GM12878 (cell line): ENCODE measurements at regions of chr14 and their contacts with region 1.

Region 1: GRCh38 chr14:60248697-60249318 is at the start of gene PPM1A:
- DNase-seq: peak; percentile 73
- ATAC-seq: peak; percentile 69
- H3K4me3 ChIP-seq: peak within 1 kb of the TSS; percentile 87
- H3K27ac ChIP-seq: peak within 1 kb of the TSS; percentile 100
- H3K4me1 ChIP-seq: peaks cover 13% of the 10 kb centered on the region
- H3K27me3 ChIP-seq: no peaks in the 10 kb centered on the region
- CTCF ChIP-seq: no peak
- EP300 ChIP-seq: peak; percentile 57 to 60
- POLR2A ChIP-seq: peak; percentile 90
- RAD21 ChIP-seq: no peak
- polyA plus RNA-seq, gene PPM1A: 49.0 to 58.6 TPM

Region 2: DNA sequence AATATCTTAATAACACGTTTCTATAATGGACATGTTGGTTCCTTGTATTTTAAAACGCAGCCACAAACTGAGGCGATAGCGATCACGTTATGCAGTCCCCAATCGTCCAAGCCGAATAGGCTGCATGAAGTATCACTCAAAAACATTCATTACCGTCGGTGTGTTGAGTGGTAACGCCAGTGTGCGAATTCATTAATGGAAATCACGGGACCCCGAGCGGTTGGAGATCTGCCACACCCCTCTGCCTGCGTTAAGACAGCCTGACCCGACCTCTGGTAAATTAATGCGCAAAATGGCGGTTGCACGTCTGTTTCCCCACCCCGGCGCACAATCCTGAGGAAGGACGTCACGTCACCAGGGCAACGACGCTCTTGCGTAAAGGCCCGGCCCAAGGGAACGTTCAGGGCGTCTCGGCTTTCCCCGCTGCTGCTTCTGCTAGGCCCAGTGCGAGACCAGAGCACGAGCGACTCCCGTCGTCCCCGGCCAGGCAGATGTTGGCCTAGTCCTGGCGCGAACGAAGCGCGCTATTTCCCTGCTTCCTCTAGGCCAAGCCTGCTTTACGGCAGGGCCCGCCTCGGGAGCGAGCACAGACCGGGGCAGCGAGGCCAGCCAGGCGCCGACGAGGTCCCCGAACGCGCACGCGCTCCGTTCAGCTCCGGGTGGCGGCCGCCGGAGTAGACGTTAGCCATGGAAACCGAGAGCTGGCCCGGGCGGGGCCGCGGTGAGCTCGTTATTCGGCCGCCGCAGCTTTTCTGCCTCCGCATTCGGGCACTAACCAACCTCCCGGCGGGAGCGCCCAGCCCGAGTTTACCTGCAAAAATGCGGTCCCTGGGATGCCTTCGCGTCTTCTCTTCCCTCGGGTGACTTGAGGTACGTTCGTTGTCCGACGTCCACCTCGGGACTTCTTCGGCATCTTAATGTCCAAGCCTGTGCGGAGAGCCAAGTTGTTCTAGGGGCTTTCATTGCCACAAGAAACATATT is 157.0 kb before region 1 on chr14 and contains the start of gene PCNX4:
- CTCF ChIA-PET with region 1: interaction called, 3 read pairs
- POLR2A ChIA-PET with region 1: interaction called, 7 read pairs
- RAD21 ChIA-PET with region 1: interaction called, 8 read pairs
- SMC1A ChIA-PET with region 1: no interaction called
- in situ Hi-C with region 1: no loop called
- intact Hi-C with region 1: loop called (anchors 2 kb)
- DNase-seq: peak; percentile 96
- ATAC-seq: peak; percentile 89
- H3K4me3 ChIP-seq: peak within 1 kb of the TSS; percentile 74
- H3K27ac ChIP-seq: peak within 1 kb of the TSS; percentile 95
- H3K4me1 ChIP-seq: peaks cover 11% of the 10 kb centered on the region
- H3K27me3 ChIP-seq: no peaks in the 10 kb centered on the region
- CTCF ChIP-seq: 0 out of 6 replicates have a peak, but pooled peaks of 1 of the 3 experiments have one; percentile 2
- EP300 ChIP-seq: peak; percentile 39 to 50; a peak in 3 of 4 replicates
- POLR2A ChIP-seq: peak; percentile 97
- RAD21 ChIP-seq: no peak
- polyA plus RNA-seq, gene PCNX4: 13.8 to 15.7 TPM

Region 3: DNA sequence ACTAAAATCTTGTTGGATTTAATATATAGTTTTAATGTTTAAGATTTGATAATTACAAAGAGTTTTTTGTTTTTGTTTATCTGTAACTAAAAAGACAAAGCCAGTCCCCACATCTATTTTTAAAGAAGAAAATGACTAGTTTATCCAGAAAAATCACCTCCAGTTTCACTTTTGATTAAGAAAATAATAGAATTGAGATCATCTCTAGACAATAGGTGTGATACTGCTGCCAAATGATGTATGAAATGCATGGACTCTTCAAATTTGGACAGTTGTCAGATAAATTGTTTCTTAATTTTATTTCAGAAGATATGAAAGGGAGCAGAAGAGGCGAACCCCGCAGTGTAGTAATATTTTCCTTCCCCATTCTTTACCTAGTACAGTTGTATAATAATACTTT is 137.1 kb before region 1 on chr14:
- CTCF ChIA-PET with region 1: no interaction called
- POLR2A ChIA-PET with region 1: no interaction called
- RAD21 ChIA-PET with region 1: no interaction called
- SMC1A ChIA-PET with region 1: no interaction called
- in situ Hi-C with region 1: no loop called
- intact Hi-C with region 1: no loop called
- DNase-seq: no peak
- ATAC-seq: peak; percentile 77
- H3K4me3 ChIP-seq: no peak overlapping the region
- H3K27ac ChIP-seq: no peak overlapping the region
- H3K4me1 ChIP-seq: no peaks in the 10 kb centered on the region
- H3K27me3 ChIP-seq: no peaks in the 10 kb centered on the region
- CTCF ChIP-seq: no peak
- EP300 ChIP-seq: no peak
- POLR2A ChIP-seq: no peak
- RAD21 ChIP-seq: no peak

Region 4: DNA sequence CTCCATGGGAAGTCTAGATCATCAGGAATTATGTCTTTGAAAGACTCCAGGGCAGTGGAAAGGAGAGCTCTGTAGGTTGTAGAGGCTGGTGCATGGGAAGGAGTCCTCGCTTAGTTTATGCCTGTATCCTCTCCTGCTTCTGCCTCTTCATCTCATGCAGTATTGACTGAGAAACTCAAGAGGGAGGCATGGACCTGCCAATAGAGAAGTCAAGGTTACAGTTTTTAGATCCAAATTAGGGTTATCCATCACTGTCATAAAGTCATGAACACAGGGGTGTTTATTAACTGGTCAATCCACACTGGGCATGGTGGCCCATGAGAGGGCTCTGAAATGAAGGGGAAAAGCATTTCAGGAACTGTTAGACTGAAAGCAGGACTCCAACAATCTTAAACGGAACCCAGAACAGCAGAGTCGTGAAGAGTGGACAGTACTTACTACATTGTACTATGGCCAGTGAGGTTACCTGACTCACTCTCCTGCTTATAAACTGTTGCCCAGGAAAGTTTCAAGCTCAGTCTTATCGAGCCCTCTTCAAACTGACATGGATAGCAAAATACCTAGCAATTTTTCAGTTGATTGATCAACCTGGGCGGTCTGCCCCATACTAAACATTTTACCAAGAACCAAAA is 53.5 kb before region 1 on chr14:
- CTCF ChIA-PET with region 1: interaction called, 6 read pairs
- POLR2A ChIA-PET with region 1: interaction called, 4 read pairs
- RAD21 ChIA-PET with region 1: interaction called, 13 read pairs
- SMC1A ChIA-PET with region 1: interaction called, 52 read pairs
- in situ Hi-C with region 1: no loop called
- intact Hi-C with region 1: no loop called
- DNase-seq: no peak
- ATAC-seq: peak; percentile 88
- H3K4me3 ChIP-seq: no peak overlapping the region
- H3K27ac ChIP-seq: no peak overlapping the region
- H3K4me1 ChIP-seq: peaks cover 10% of the 10 kb centered on the region
- H3K27me3 ChIP-seq: no peaks in the 10 kb centered on the region
- CTCF ChIP-seq: peak; percentile 50 to 70 (median 59); a peak in 5 of 6 replicates
- EP300 ChIP-seq: no peak
- POLR2A ChIP-seq: no peak
- RAD21 ChIP-seq: peak; percentile 91

Region 5: GRCh38 chr14:60212503-60213371 is 36.1 kb before region 1 on chr14:
- CTCF ChIA-PET with region 1: interaction called, 42 read pairs
- POLR2A ChIA-PET with region 1: interaction called, 251 read pairs
- RAD21 ChIA-PET with region 1: interaction called, 446 read pairs
- SMC1A ChIA-PET with region 1: interaction called, 303 read pairs
- in situ Hi-C with region 1: no loop called
- intact Hi-C with region 1: loop called (anchors 1 kb)
- DNase-seq: peak; percentile 98
- ATAC-seq: peak; percentile 89
- H3K4me3 ChIP-seq: no peak overlapping the region
- H3K27ac ChIP-seq: peak overlapping the region; percentile 93
- H3K4me1 ChIP-seq: peaks cover 39% of the 10 kb centered on the region
- H3K27me3 ChIP-seq: no peaks in the 10 kb centered on the region
- CTCF ChIP-seq: no peak
- EP300 ChIP-seq: peak; percentile 73 to 86
- POLR2A ChIP-seq: no peak; the same call in 1 of the 2 replicates
- RAD21 ChIP-seq: no peak

Region 6: DNA sequence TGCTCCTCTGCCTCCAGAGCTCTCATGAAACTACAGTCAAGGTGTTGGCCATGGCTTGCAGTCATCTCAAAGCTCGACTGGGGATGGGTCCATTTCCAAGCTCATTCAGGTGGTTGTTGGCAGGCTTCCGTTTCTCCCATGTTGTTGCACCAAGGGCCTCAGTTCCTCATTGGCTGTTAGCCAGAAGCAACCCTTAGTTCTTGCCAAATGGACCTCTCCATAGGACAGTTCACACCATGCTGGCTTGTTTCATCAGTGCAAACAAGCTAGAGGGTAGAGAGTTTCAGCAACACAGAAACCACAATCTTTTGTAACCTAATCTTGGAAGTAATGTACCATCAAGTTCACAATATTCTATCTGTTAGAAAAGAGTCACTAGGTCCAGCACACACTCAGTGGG is 22.5 kb before region 1 on chr14:
- CTCF ChIA-PET with region 1: interaction called, 10 read pairs
- POLR2A ChIA-PET with region 1: interaction called, 78 read pairs
- RAD21 ChIA-PET with region 1: interaction called, 30 read pairs
- SMC1A ChIA-PET with region 1: interaction called, 19 read pairs
- in situ Hi-C with region 1: no loop called
- intact Hi-C with region 1: no loop called
- DNase-seq: no peak
- ATAC-seq: no peak
- H3K4me3 ChIP-seq: no peak overlapping the region
- H3K27ac ChIP-seq: no peak overlapping the region
- H3K4me1 ChIP-seq: peaks cover 2% of the 10 kb centered on the region
- H3K27me3 ChIP-seq: no peaks in the 10 kb centered on the region
- CTCF ChIP-seq: no peak
- EP300 ChIP-seq: no peak
- POLR2A ChIP-seq: no peak
- RAD21 ChIP-seq: no peak

Region 7: GRCh38 chr14:60276342-60276741 is 27.5 kb after region 1 on chr14:
- CTCF ChIA-PET with region 1: interaction called, 4 read pairs
- POLR2A ChIA-PET with region 1: no interaction called
- RAD21 ChIA-PET with region 1: interaction called, 13 read pairs
- SMC1A ChIA-PET with region 1: interaction called, 7 read pairs
- in situ Hi-C with region 1: no loop called
- intact Hi-C with region 1: no loop called
- DNase-seq: no peak
- ATAC-seq: no peak
- H3K4me3 ChIP-seq: no peak overlapping the region
- H3K27ac ChIP-seq: no peak overlapping the region
- H3K4me1 ChIP-seq: peaks cover 8% of the 10 kb centered on the region
- H3K27me3 ChIP-seq: no peaks in the 10 kb centered on the region
- CTCF ChIP-seq: no peak
- EP300 ChIP-seq: no peak
- POLR2A ChIP-seq: no peak
- RAD21 ChIP-seq: no peak

Region 8: DNA sequence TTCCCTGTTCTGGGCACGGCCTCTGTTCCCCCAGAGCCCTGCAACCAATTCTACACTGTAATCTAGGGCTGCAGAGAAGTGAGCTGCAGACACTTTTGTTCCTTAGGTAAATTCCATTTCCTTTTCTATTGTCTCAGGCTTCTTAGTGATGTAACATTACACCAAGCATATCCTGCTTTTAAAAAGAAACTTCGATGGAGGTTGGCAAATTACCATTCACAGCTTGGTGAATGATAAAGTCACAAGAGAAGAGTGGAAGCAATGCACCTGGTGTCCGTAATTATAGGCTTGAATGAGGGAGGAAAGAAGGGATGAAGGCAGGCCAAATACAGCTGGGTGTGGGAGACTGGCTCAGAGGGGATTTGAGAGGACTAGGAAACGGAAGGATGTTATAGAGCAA is 68.8 kb after region 1 on chr14:
- CTCF ChIA-PET with region 1: no interaction called
- POLR2A ChIA-PET with region 1: no interaction called
- RAD21 ChIA-PET with region 1: no interaction called
- SMC1A ChIA-PET with region 1: no interaction called
- in situ Hi-C with region 1: no loop called
- intact Hi-C with region 1: no loop called
- DNase-seq: no peak
- ATAC-seq: no peak
- H3K4me3 ChIP-seq: no peak overlapping the region
- H3K27ac ChIP-seq: no peak overlapping the region
- H3K4me1 ChIP-seq: no peaks in the 10 kb centered on the region
- H3K27me3 ChIP-seq: no peaks in the 10 kb centered on the region
- CTCF ChIP-seq: no peak
- EP300 ChIP-seq: no peak
- POLR2A ChIP-seq: no peak
- RAD21 ChIP-seq: no peak

Region 9: GRCh38 chr14:60989599-60989998 is 740.8 kb after region 1 on chr14:
- CTCF ChIA-PET with region 1: no interaction called
- POLR2A ChIA-PET with region 1: no interaction called
- RAD21 ChIA-PET with region 1: no interaction called
- SMC1A ChIA-PET with region 1: no interaction called
- in situ Hi-C with region 1: no loop called
- intact Hi-C with region 1: no loop called
- DNase-seq: no peak
- ATAC-seq: no peak
- H3K4me3 ChIP-seq: no peak overlapping the region
- H3K27ac ChIP-seq: no peak overlapping the region
- H3K4me1 ChIP-seq: no peaks in the 10 kb centered on the region
- H3K27me3 ChIP-seq: no peaks in the 10 kb centered on the region
- CTCF ChIP-seq: no peak
- EP300 ChIP-seq: no peak
- POLR2A ChIP-seq: no peak
- RAD21 ChIP-seq: no peak